Breast epithelium (tissue), 4 donors: ENCODE measurements at regions of chr16 and their contacts with region 1.

Region 1: GRCh38 chr16:51839727-51840462 is 688.8 kb upstream of the SALL1 start:
- DNase-seq: no peak
- H3K4me3 ChIP-seq: no peak overlapping the region
- H3K27ac ChIP-seq: no peak overlapping the region
- H3K4me1 ChIP-seq: no peaks in the 10 kb centered on the region
- H3K27me3 ChIP-seq: no peaks in the 10 kb centered on the region
- CTCF ChIP-seq: no peak
- POLR2A ChIP-seq: no peak

Region 2: GRCh38 chr16:51779240-51779639 is 60.7 kb before region 1 on chr16:
- intact Hi-C with region 1: no loop called
- DNase-seq: no peak
- H3K4me3 ChIP-seq: no peak overlapping the region
- H3K27ac ChIP-seq: no peak overlapping the region
- H3K4me1 ChIP-seq: no peaks in the 10 kb centered on the region
- H3K27me3 ChIP-seq: peaks cover 0 to 3% of the 10 kb centered on the region in 2 donors
- CTCF ChIP-seq: no peak
- POLR2A ChIP-seq: no peak

Region 3: DNA sequence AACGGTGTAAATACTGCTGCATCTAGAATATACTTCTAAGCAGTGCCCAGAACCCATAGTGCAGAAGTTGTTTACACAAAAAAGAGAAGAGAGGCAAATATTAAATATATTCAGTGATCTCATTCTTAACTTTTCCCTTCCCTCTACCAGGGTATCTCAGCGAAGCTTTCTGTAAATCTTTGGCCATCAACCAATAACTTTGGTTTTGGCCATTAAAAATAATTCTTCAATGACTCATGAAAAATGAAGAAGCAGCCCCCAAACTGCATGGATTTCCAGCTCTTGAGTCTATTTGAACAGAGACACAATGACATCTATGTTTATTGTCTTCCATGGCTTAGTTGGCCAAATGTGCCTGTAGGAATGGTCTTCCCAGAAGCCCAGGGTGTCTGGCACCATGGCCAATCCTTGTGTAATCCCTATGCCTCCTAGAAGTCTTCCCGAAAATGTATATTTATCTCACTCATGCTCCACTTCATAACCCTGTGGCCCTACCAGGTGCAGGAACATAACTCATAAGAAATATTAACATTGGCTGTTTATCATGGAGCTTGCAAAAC is 60.4 kb after region 1 on chr16:
- intact Hi-C with region 1: loop called (anchors 2 kb)
- DNase-seq: no peak
- H3K4me3 ChIP-seq: no peak overlapping the region
- H3K27ac ChIP-seq: no peak overlapping the region
- H3K4me1 ChIP-seq: no peaks in the 10 kb centered on the region
- H3K27me3 ChIP-seq: no peaks in the 10 kb centered on the region
- CTCF ChIP-seq: no peak
- POLR2A ChIP-seq: no peak

Region 4: GRCh38 chr16:51919736-51920135 is 79.8 kb after region 1 on chr16:
- intact Hi-C with region 1: no loop called
- DNase-seq: no peak
- H3K4me3 ChIP-seq: no peak overlapping the region
- H3K27ac ChIP-seq: no peak overlapping the region
- H3K4me1 ChIP-seq: no peaks in the 10 kb centered on the region
- H3K27me3 ChIP-seq: peaks cover 0 to 4% of the 10 kb centered on the region in 2 donors
- CTCF ChIP-seq: no peak
- POLR2A ChIP-seq: no peak